Activated CD8-positive, alpha-beta T cell treated with anti-CD3 and anti-CD28 coated beads, Interleukin-2, amount 10 ng/mL, durations not matched to agents 7 days and 5 days (primary cell): ENCODE measurements at regions of chr11 and their contacts with region 1.

Region 1: GRCh38 chr11:9384535-9385303 is at the start of gene IPO7:
- DNase-seq: peak; percentile 94
- ATAC-seq: peak; percentile 97
- H3K4me3 Mint-ChIP-seq: peak within 1 kb of the TSS; percentile 89
- H3K27ac Mint-ChIP-seq: peak within 1 kb of the TSS; percentile 90
- H3K4me1 Mint-ChIP-seq: peaks cover 31% of the 10 kb centered on the region
- H3K27me3 Mint-ChIP-seq: no peaks in the 10 kb centered on the region
- total RNA-seq, gene IPO7: 110 to 111 TPM

Region 2: DNA sequence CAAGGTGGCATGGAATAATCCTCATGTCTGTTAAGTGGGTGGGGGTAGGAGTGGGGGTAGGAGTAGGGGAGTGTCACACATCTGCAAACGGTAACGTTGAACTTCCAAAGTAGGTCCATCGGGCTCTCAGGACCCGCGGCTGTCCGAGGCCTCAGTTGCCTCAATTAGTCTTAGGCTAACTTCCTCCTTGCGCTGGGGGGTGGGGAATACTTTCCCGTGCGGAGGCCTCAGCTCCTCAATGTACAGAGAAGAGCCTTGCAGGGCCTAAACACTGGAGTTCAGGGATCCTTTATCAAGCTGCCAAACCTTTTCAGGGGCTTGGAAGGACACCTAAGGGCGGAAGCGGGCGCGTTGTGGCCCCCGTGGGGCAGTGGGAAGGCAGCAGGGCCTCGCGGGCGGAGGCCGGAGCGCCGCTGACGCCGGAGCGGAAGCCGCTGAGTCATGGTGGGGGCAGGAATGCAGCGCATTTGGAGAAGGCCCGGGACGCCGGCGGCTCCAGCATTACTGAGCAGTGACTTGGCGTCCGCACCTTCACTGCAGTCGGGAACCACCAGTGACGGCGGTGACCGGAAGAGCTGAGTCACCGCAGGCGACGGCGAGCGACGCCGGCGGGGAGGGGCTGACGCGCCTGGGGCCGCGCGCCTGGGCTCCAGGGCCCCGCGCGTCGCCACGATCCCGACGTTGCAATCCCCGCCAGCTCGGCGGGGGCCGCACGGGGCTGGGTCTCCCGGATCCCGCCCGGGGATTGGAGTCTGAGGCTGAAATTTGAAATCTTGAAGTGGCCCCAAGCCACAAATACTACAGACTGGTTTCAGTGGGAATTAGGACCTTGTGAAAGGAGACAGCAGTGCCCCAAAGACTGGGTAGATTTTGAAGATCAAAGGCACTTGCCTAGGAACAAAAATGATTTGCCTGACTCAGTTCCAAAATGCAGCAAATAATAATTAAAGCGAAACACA is 20.5 kb before region 1 on chr11:
- CTCF ChIA-PET with region 1: interaction called, 4 read pairs
- POLR2A ChIA-PET with region 1: interaction called, 19 read pairs
- DNase-seq: peak; percentile 80
- ATAC-seq: peak; percentile 94
- H3K4me3 Mint-ChIP-seq: peak overlapping the region; percentile 75
- H3K27ac Mint-ChIP-seq: peak overlapping the region; percentile 90
- H3K4me1 Mint-ChIP-seq: peaks cover 34% of the 10 kb centered on the region
- H3K27me3 Mint-ChIP-seq: peaks cover 2% of the 10 kb centered on the region

Region 3: GRCh38 chr11:9396752-9397151 is 12.0 kb after region 1 on chr11:
- CTCF ChIA-PET with region 1: interaction called, 9 read pairs
- POLR2A ChIA-PET with region 1: interaction called, 12 read pairs
- DNase-seq: no peak
- ATAC-seq: peak; percentile 10
- H3K4me3 Mint-ChIP-seq: no peak overlapping the region
- H3K27ac Mint-ChIP-seq: no peak overlapping the region
- H3K4me1 Mint-ChIP-seq: peaks cover 51% of the 10 kb centered on the region
- H3K27me3 Mint-ChIP-seq: no peaks in the 10 kb centered on the region

Region 4: GRCh38 chr11:9561279-9561982 is 176.7 kb after region 1 on chr11:
- CTCF ChIA-PET with region 1: no interaction called
- POLR2A ChIA-PET with region 1: no interaction called
- DNase-seq: no peak
- ATAC-seq: no peak
- H3K4me3 Mint-ChIP-seq: no peak overlapping the region
- H3K27ac Mint-ChIP-seq: no peak overlapping the region
- H3K4me1 Mint-ChIP-seq: peaks cover 11% of the 10 kb centered on the region
- H3K27me3 Mint-ChIP-seq: no peaks in the 10 kb centered on the region